ENCODE measurements at regions of chr16 and their contacts with region 1.

Region 1: DNA sequence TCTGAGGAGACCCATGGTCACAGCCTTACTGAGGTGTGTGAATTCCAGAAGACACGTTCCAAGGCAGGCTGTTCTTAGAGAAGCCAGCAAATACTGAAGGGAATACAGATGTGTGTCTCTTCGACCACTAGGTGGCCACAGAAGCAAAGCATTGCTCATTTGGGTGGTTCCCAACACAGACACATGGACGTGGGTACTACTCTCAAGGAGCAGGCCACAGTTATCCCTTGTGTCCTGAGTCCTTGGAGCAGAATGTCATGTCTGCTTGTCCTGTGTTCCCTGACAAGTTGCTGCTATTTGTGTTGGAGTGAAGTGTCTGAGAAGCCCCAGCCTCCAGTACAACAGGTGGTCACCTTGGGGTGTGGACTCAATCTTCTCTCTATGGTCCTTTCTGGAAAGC is 30.3 kb downstream of the HMOX2 start:
- DNase-seq: peak; percentile 73
- H3K4me3 ChIP-seq: peak overlapping the region in 1 of 2 experiments; percentile 38; a peak in 1 of 4 replicates
- H3K27ac ChIP-seq: no peak overlapping the region
- H3K4me1 ChIP-seq: peaks cover 3 to 4% of the 10 kb centered on the region in 2 experiments; a peak in 3 of 4 replicates
- H3K27me3 ChIP-seq: no peaks in the 10 kb centered on the region
- CTCF ChIP-seq: peak; percentile 81
- EP300 ChIP-seq: no peak
- RAD21 ChIP-seq: peak; percentile 90

Region 2: GRCh38 chr16:4517812-4518680 is 11.6 kb after region 1 on chr16:
- CTCF ChIA-PET with region 1: interaction called, 37 read pairs
- POLR2A ChIA-PET with region 1: interaction called, 3 read pairs
- DNase-seq: peak; percentile 77
- H3K4me3 ChIP-seq: no peak overlapping the region; a peak in 1 of 4 replicates
- H3K27ac ChIP-seq: no peak overlapping the region
- H3K4me1 ChIP-seq: peaks cover 0 to 14% of the 10 kb centered on the region in 2 experiments; a peak in 1 of 4 replicates
- H3K27me3 ChIP-seq: no peaks in the 10 kb centered on the region
- CTCF ChIP-seq: peak; percentile 56
- EP300 ChIP-seq: no peak
- RAD21 ChIP-seq: peak; percentile 77

Region 3: DNA sequence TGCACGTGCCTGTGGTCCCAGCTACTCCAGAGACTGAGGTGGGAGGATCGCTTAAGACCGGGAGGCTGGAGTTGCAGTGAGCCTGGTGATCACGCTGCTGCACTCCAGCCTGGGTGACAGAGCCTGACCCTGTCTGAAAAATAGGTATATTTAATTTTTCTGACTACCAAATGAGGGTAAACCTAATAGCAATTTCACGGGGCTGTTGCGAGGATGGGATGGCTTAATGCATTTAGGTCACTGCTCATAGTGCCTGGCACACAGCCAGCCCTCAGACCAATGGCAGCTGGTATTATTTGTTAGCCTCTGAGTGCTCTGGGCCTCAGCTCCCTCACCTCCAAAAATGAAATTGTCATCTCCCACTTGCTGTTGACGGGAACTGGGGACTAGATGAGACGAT is 38.0 kb after region 1 on chr16:
- CTCF ChIA-PET with region 1: interaction called, 182 read pairs
- POLR2A ChIA-PET with region 1: no interaction called
- DNase-seq: no peak
- H3K4me3 ChIP-seq: no peak overlapping the region
- H3K27ac ChIP-seq: no peak overlapping the region
- H3K4me1 ChIP-seq: peaks cover 0 to 4% of the 10 kb centered on the region in 2 experiments; a peak in 1 of 4 replicates
- H3K27me3 ChIP-seq: no peaks in the 10 kb centered on the region
- CTCF ChIP-seq: no peak
- EP300 ChIP-seq: no peak
- RAD21 ChIP-seq: no peak

Region 4: GRCh38 chr16:4580245-4580644 is 73.8 kb after region 1 on chr16:
- CTCF ChIA-PET with region 1: interaction called, 64 read pairs
- POLR2A ChIA-PET with region 1: no interaction called
- DNase-seq: no peak
- H3K4me3 ChIP-seq: no peak overlapping the region
- H3K27ac ChIP-seq: no peak overlapping the region
- H3K4me1 ChIP-seq: no peaks in the 10 kb centered on the region
- H3K27me3 ChIP-seq: no peaks in the 10 kb centered on the region
- CTCF ChIP-seq: no peak
- EP300 ChIP-seq: no peak
- RAD21 ChIP-seq: no peak

Region 5: GRCh38 chr16:4591706-4592470 is 85.4 kb after region 1 on chr16:
- CTCF ChIA-PET with region 1: interaction called, 64 read pairs
- POLR2A ChIA-PET with region 1: no interaction called
- DNase-seq: peak; percentile 35
- H3K4me3 ChIP-seq: no peak overlapping the region
- H3K27ac ChIP-seq: no peak overlapping the region
- H3K4me1 ChIP-seq: no peaks in the 10 kb centered on the region; a peak in 1 of 4 replicates
- H3K27me3 ChIP-seq: no peaks in the 10 kb centered on the region
- CTCF ChIP-seq: no peak
- EP300 ChIP-seq: no peak
- RAD21 ChIP-seq: no peak

Measured in SK-N-SH (cell line).